Activated CD4-positive, alpha-beta memory T cell treated with anti-CD3 and anti-CD28 coated beads for 36 hours (primary cell): ENCODE measurements at regions of chr17 and their contacts with region 1.

Region 1: DNA sequence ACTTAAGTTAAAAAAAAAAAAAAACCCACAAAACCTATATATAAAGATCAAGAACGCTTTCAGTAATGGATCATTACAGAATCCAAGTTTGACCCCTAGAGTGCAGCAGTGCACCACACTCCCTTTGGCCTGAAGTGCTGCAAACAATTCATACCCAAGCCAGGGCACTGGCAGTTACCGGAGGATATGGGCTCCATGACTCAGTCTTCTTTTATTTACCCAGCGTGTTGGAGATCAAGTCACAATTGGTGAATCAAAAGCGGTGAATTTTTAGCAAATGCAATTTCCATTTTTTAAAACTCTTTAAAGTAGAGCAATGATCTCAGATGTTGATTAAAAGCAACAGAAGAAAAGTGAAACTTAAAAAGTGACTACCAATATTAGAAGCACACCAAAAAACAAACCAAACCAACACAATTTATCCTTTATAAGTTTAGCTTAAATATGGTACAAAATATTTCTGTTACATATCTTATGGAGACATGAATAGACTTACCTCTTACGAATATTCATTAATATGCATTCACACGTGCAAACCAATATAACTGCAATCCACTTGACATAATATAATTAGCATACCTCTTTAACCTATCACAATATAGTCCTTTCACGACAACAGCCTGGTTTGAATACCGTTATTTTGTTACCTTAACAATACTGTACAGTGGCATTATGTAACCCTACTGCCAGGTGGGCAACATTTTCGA is 46.3 kb downstream of the ZNF652 start:
- DNase-seq: peak; percentile 87
- H3K4me3 Mint-ChIP-seq: peak overlapping the region; percentile 51
- H3K27ac Mint-ChIP-seq: peak overlapping the region; percentile 33
- H3K4me1 Mint-ChIP-seq: peaks cover 11% of the 10 kb centered on the region
- H3K27me3 Mint-ChIP-seq: no peaks in the 10 kb centered on the region

Region 2: GRCh38 chr17:49343273-49343672 is 27.6 kb after region 1 on chr17:
- CTCF ChIA-PET with region 1: interaction called, 10 read pairs
- POLR2A ChIA-PET with region 1: no interaction called
- intact Hi-C with region 1: loop called (anchors 1 kb)
- DNase-seq: no peak
- H3K4me3 Mint-ChIP-seq: peak overlapping the region; percentile 38
- H3K27ac Mint-ChIP-seq: peak overlapping the region; percentile 63
- H3K4me1 Mint-ChIP-seq: peaks cover 62% of the 10 kb centered on the region
- H3K27me3 Mint-ChIP-seq: no peaks in the 10 kb centered on the region

Region 3: DNA sequence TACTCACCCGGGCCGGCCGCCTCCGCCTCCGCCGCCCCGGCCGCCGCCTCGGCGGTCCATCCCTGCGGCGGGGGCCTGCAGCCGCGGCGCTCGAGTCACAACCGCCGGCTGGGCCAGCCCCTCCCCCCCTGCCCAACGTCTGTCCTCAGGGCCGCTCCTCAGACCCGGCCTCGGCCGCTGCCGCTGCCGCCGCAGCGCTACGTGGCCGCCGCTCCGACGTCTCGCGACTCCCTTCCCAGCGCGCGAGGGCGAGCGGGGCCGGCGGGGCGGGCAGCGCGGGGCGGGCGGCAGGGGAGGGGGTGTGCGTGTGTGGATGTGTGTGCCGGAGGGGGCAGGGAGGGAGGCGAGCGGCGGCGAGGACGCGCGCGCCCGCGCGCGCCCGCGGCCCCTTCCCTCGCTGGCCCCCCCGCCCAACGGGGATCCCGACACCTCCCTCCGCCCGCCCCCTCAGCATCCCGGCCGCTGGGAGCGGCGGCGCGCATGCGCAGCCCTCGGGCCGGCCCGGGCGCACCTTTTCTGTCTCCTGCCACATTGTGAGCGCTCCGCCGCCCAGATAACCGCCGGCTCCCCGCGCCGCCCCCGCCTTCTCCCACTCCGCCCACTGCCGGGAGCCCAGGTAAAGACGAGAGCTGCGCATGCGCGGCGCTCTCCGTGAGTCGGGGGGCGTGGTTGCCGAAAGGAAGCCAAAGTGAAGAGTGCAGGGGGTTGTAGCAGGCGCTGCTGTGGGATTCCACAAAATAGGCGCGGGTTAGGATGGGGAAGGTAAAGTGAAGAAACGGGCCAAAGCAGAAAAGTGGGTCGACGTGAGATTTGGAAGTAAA is 46.4 kb after region 1 on chr17 and contains the start of gene ZNF652:
- CTCF ChIA-PET with region 1: interaction called, 106 read pairs
- POLR2A ChIA-PET with region 1: interaction called, 3 read pairs
- intact Hi-C with region 1: no loop called
- DNase-seq: peak; percentile 94
- H3K4me3 Mint-ChIP-seq: peak within 1 kb of the TSS; percentile 94
- H3K27ac Mint-ChIP-seq: peak within 1 kb of the TSS; percentile 95
- H3K4me1 Mint-ChIP-seq: peaks cover 51% of the 10 kb centered on the region
- H3K27me3 Mint-ChIP-seq: no peaks in the 10 kb centered on the region
- total RNA-seq, gene ZNF652: 5.7 to 7.2 TPM

Region 4: GRCh38 chr17:49370971-49371834 is 55.5 kb after region 1 on chr17:
- CTCF ChIA-PET with region 1: interaction called, 106 read pairs
- POLR2A ChIA-PET with region 1: interaction called, 4 read pairs
- intact Hi-C with region 1: loop called (anchors 1 kb)
- DNase-seq: no peak
- H3K4me3 Mint-ChIP-seq: no peak overlapping the region
- H3K27ac Mint-ChIP-seq: no peak overlapping the region
- H3K4me1 Mint-ChIP-seq: peaks cover 3% of the 10 kb centered on the region
- H3K27me3 Mint-ChIP-seq: no peaks in the 10 kb centered on the region

Region 5: DNA sequence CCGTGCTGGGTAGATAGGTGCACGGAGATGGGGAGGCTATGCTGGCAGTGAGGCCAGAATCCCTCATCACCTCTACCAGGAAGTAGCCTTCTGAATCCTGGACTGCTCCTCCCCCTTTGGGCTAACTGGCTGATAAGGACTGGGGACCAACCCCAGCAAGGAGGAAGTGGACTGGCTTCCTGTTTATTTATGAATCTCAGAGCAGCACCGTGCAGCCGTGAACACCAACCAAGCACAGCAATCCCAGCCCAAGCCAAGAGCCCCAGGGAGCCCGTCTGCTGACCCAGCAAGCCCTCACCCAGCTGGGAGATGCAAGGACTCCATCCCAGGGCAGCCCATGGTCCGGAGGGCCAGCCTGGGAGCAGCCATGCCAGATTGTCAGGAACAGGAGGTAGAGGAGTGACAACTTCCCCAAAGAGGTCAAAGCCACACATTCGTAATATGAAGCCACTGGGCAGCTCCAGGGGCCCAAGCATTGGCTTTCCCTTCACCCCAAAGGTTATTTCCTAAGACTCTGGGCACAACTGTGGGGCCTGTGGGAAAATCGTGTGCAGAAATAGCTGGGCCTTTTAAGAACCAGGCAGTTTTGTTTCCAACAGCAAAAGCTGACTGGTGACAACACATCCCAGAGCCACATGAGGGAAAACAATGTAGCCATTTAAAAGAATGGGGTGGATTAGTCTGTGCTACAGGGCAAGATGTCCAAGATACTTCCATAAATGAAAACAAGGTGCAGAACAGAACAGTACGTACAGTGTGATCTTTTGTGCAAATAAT is 75.0 kb after region 1 on chr17:
- CTCF ChIA-PET with region 1: interaction called, 69 read pairs
- POLR2A ChIA-PET with region 1: no interaction called
- intact Hi-C with region 1: loop called (anchors 1 kb)
- DNase-seq: peak; percentile 33
- H3K4me3 Mint-ChIP-seq: no peak overlapping the region
- H3K27ac Mint-ChIP-seq: peak overlapping the region; percentile 71
- H3K4me1 Mint-ChIP-seq: peaks cover 53% of the 10 kb centered on the region
- H3K27me3 Mint-ChIP-seq: no peaks in the 10 kb centered on the region

Region 6: DNA sequence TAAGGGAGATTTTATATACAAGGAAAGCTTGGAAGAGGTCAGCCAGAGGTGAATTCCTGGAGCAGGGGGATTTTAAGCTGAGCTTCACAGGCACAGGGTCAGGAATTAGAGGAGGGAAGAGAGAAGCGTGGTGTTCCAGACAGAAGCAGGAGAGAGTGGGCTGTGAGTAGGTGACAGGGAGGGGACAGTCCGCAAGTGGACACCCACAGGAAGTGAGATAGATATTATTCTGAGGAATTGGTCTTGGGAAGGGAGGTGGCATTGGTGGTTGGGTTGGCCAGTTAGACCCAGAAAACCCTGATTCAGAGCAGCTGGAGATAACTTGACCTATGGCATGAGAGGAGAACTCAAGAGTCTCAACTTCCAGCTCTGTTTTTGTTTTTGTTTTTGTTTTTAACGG is 84.3 kb after region 1 on chr17:
- CTCF ChIA-PET with region 1: interaction called, 69 read pairs
- POLR2A ChIA-PET with region 1: no interaction called
- intact Hi-C with region 1: loop called (anchors 1 kb)
- DNase-seq: no peak
- H3K4me3 Mint-ChIP-seq: no peak overlapping the region
- H3K27ac Mint-ChIP-seq: no peak overlapping the region
- H3K4me1 Mint-ChIP-seq: peaks cover under 1% of the 10 kb centered on the region
- H3K27me3 Mint-ChIP-seq: no peaks in the 10 kb centered on the region

Region 7: DNA sequence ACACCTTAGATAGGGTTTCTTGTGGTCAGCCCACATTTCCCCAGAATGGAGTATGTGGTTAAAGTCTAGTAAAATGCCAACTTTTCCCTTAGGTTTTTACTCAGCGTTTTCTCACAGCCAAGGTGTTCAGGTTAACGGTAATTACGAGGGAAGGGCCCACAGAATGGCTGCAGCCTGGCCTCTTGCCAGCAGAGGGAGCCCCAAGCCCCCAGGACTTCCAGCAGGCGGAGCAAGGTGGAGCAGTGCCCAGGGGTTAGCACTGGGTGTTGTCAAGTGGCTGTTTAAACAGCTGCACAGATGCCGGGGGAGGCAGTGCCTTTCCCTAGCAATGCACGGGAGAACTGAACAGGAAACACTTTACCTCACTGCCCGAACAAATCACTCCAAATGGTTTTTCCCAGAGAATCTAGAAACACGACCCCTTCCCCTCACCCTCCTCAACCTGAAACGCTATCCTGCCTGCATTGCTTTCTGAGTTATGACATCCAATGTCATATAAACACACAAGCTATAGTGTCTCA is 92.3 kb after region 1 on chr17:
- CTCF ChIA-PET with region 1: interaction called, 17 read pairs
- POLR2A ChIA-PET with region 1: no interaction called
- intact Hi-C with region 1: no loop called
- DNase-seq: peak; percentile 91
- H3K4me3 Mint-ChIP-seq: no peak overlapping the region
- H3K27ac Mint-ChIP-seq: peak overlapping the region; percentile 40
- H3K4me1 Mint-ChIP-seq: peaks cover 13% of the 10 kb centered on the region
- H3K27me3 Mint-ChIP-seq: no peaks in the 10 kb centered on the region